ENCODE measurements at regions of chr1 and their contacts with region 1.

Region 1: GRCh38 chr1:45499415-45499769 is 481 bp downstream of the CCDC163 start:
- DNase-seq: no peak
- ATAC-seq: no peak
- H3K4me3 Mint-ChIP-seq: peak overlapping the region; percentile 97
- H3K27ac Mint-ChIP-seq: peak overlapping the region; percentile 90; the same call in 1 of the 2 replicates
- H3K4me1 Mint-ChIP-seq: peaks cover 16% of the 10 kb centered on the region
- H3K27me3 Mint-ChIP-seq: no peaks in the 10 kb centered on the region
- CTCF ChIP-seq: no peak

Region 2: GRCh38 chr1:45148209-45148825 is 351.1 kb before region 1 on chr1:
- CTCF ChIA-PET with region 1: no interaction called
- POLR2A ChIA-PET with region 1: no interaction called
- DNase-seq: no peak
- ATAC-seq: no peak
- H3K4me3 Mint-ChIP-seq: no peak overlapping the region
- H3K27ac Mint-ChIP-seq: no peak overlapping the region
- H3K4me1 Mint-ChIP-seq: peaks cover 7% of the 10 kb centered on the region
- H3K27me3 Mint-ChIP-seq: no peaks in the 10 kb centered on the region
- CTCF ChIP-seq: no peak

Region 3: DNA sequence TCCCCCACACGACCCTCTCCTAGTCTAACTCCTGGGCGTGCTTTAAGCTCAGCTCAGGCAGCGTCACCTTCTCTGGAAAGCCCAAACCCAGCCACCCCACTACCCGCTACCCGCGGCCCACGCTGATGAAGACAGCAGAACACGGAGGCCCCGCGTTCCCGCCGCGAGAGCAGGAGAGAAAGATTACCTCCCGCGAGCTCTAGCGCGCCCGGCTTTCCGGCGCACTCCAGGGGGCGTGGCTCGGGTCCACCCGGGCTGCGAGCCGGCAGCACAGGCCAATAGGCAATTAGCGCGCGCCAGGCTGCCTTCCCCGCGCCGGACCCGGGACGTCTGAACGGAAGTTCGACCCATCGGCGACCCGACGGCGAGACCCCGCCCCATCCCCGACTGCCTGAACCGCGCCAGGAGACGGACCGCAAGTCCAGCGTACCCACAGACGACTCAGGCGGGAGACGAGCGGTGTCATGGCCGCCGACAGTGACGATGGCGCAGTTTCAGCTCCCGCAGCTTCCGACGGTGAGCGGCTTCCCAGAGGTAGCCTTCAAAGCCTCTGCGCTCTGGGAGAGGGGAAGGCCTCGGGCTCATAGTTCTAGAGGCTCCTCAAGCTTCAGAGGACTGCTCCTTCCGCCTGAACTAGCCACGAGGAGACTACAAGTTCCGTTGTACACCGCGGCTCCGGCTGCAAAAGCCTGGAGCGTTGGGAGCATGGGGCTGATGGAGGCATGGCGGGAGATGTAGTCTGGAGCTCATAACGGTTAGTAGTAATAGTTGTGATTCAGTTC is 159.4 kb before region 1 on chr1 and contains the starts of genes MUTYH and TOE1:
- CTCF ChIA-PET with region 1: interaction called, 7 read pairs
- POLR2A ChIA-PET with region 1: interaction called, 11 read pairs
- DNase-seq: peak; percentile 98
- ATAC-seq: peak; percentile 93
- H3K4me3 Mint-ChIP-seq: peak within 1 kb of the TSS; percentile 100
- H3K27ac Mint-ChIP-seq: peak within 1 kb of the TSS; percentile 99
- H3K4me1 Mint-ChIP-seq: peaks cover 32% of the 10 kb centered on the region
- H3K27me3 Mint-ChIP-seq: no peaks in the 10 kb centered on the region
- CTCF ChIP-seq: no peak
- total RNA-seq, gene MUTYH: 58.3 to 67.2 TPM (median 65.7 TPM) in 3 replicates
- total RNA-seq, gene TOE1: 7.4 to 10.9 TPM (median 10.0 TPM) in 3 replicates

Region 4: DNA sequence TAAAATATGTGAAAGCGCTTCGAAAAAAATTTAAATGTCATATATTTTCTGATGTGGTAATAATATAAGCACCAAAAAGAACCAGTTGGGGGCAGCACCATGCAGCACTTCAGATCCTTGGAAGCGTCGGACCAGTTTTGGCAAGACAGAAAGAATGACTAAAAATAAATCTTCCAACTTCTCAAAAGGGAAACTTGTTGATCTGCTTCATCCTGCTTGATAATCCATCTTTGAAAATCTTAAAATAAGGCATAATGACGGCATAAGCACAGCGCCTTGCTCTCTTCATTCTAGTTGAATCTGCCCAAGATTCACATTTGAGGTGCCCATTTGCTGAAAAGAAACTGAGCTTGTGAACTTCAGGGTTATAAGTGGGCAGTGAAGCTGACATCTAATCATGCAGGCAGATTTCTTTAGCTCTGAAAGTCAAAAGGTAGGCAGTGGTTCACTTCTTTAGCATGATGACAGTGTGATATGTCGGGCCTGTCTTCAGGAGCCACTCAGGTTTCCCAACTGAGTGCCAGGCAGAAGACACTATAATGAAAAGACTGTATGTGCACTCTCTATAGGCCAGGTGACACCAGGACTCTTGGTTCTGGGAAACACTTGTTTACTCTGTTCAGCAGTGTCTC is 139.4 kb before region 1 on chr1:
- CTCF ChIA-PET with region 1: interaction called, 170 read pairs
- POLR2A ChIA-PET with region 1: no interaction called
- DNase-seq: peak; percentile 32
- ATAC-seq: peak; percentile 50
- H3K4me3 Mint-ChIP-seq: peak overlapping the region; percentile 55
- H3K27ac Mint-ChIP-seq: peak overlapping the region; percentile 95
- H3K4me1 Mint-ChIP-seq: peaks cover 30% of the 10 kb centered on the region
- H3K27me3 Mint-ChIP-seq: no peaks in the 10 kb centered on the region
- CTCF ChIP-seq: peak; percentile 20; the same call in 1 of the 2 replicates

Region 5: DNA sequence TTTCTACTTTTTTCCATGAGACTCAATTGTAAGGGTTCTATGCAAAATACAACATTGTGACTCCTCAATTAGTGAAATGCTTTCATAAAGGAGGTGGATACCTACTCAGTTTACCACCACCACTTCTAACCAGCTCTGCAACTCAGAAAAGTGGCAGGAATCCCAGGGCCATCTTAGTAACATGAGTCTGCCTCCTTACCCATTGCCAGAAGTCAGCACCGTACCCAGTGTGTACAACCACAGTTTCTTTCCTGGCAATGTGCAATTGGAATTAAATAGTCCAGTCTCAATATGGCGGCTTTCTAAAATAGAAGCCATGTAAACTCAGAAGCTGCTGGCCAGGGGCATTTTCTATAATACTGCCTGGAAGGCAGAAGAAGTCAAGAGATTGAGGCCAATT is 40.5 kb before region 1 on chr1:
- CTCF ChIA-PET with region 1: no interaction called
- POLR2A ChIA-PET with region 1: no interaction called
- DNase-seq: no peak
- ATAC-seq: no peak
- H3K4me3 Mint-ChIP-seq: no peak overlapping the region
- H3K27ac Mint-ChIP-seq: no peak overlapping the region
- H3K4me1 Mint-ChIP-seq: peaks cover 16% of the 10 kb centered on the region
- H3K27me3 Mint-ChIP-seq: no peaks in the 10 kb centered on the region
- CTCF ChIP-seq: no peak

Region 6: GRCh38 chr1:45512641-45513054 is 13.3 kb after region 1 on chr1:
- CTCF ChIA-PET with region 1: interaction called, 5 read pairs
- POLR2A ChIA-PET with region 1: interaction called, 11 read pairs
- DNase-seq: peak; percentile 67
- ATAC-seq: peak; percentile 55
- H3K4me3 Mint-ChIP-seq: no peak overlapping the region
- H3K27ac Mint-ChIP-seq: 0 out of 2 replicates have a peak overlapping the region, but pooled peaks have one; percentile 7
- H3K4me1 Mint-ChIP-seq: no peaks in the 10 kb centered on the region
- H3K27me3 Mint-ChIP-seq: no peaks in the 10 kb centered on the region
- CTCF ChIP-seq: peak; percentile 53

Region 7: GRCh38 chr1:45521398-45522323 is 22.3 kb after region 1 on chr1 and contains the start of gene PRDX1:
- CTCF ChIA-PET with region 1: interaction called, 4 read pairs
- POLR2A ChIA-PET with region 1: interaction called, 16 read pairs
- DNase-seq: peak; percentile 98
- ATAC-seq: peak; percentile 89
- H3K4me3 Mint-ChIP-seq: peak within 1 kb of the TSS; percentile 95
- H3K27ac Mint-ChIP-seq: peak within 1 kb of the TSS; percentile 100
- H3K4me1 Mint-ChIP-seq: peaks cover 43% of the 10 kb centered on the region
- H3K27me3 Mint-ChIP-seq: no peaks in the 10 kb centered on the region
- CTCF ChIP-seq: no peak
- total RNA-seq, gene PRDX1: 1,102 to 1,197 TPM (median 1,130 TPM) in 3 replicates

Region 8: DNA sequence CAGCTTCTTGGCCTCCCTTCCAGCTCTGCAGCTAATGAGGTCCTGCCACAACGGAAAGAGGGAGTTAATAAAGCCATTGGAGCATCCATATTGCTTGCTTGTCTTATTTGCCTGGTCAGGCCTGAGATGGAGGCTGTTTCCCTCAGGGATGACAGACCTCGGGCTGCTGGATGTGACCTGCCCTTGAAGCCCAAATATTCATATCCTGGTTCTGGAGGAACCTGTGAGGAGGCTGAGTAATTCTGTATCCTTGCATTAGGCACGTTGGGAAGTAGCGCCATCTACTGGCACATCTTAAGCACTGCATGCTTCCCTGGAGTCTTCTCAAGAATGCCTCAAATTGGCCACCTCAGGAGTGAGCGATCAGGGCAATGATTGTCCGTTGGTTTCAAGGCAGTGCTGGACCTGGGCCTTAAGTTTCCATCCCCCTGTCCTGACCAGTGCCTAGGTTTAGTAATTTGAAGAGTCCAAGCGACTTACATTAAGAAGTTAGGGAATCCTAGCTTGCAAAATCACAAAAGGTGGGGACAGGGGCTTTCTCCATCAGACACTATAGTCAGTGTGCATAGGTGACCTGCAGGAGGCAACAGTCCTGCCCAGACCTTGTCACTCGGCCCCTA is 70.7 kb after region 1 on chr1:
- CTCF ChIA-PET with region 1: interaction called, 12 read pairs
- POLR2A ChIA-PET with region 1: interaction called, 3 read pairs
- DNase-seq: peak; percentile 79
- ATAC-seq: peak; percentile 74
- H3K4me3 Mint-ChIP-seq: no peak overlapping the region
- H3K27ac Mint-ChIP-seq: no peak overlapping the region; the same call in 1 of the 2 replicates
- H3K4me1 Mint-ChIP-seq: peaks cover 30% of the 10 kb centered on the region
- H3K27me3 Mint-ChIP-seq: no peaks in the 10 kb centered on the region
- CTCF ChIP-seq: peak; percentile 98

Measured in WTC11 (cell line).